ENCODE measurements at regions of chr18 and their contacts with region 1.

Region 1: GRCh38 chr18:35972197-35973052 is at the start of gene RMP24:
- DNase-seq: peak; percentile 85
- ATAC-seq: peak; percentile 94
- H3K4me3 Mint-ChIP-seq: peak within 1 kb of the TSS; percentile 98
- H3K27ac Mint-ChIP-seq: peak within 1 kb of the TSS; percentile 97
- H3K4me1 Mint-ChIP-seq: peaks cover 50% of the 10 kb centered on the region
- H3K27me3 Mint-ChIP-seq: no peaks in the 10 kb centered on the region
- CTCF ChIP-seq: no peak

Region 2: DNA sequence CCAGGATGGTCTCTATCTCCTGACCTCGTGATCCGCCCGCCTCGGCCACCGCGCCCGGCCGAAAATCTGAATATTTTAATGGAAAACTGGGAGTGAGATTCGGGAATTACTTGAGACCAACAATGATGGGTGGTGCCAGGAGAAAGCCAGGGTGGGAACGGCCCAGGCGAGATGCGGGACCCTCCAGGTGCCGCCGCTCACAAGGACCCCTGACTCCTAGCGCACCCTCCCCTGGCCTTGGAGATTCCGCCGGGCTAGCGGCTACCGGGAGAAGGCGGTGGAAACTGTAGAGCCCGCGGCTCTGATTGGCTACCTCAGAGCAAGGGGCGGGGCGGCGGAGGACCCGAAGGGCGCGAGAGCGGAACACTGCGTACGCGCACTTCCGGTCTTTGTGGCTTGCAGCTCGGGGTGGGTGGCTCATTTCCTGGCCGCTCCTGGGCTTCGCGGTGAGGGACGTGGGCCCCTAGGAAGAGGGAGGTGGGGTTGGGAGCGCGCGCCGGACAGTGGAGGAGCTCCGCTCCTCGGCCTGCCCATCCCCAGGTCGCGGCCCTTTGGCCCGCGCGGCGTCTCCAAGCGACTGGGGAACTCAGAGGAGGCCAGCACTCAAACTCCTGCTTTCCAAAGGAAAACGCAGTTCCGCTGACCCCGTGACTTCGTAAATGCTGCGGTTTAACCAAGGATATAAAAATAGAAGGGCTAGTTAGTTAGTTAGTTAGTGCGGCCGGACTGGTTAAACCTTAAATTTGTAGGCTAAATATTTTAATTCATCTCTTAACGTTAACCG is 731.6 kb before region 1 on chr18 and contains the start of gene ZNF397:
- CTCF ChIA-PET with region 1: no interaction called
- POLR2A ChIA-PET with region 1: no interaction called
- intact Hi-C with region 1: loop called (anchors 1 kb)
- DNase-seq: peak; percentile 93
- ATAC-seq: peak; percentile 97
- H3K4me3 Mint-ChIP-seq: peak within 1 kb of the TSS; percentile 97
- H3K27ac Mint-ChIP-seq: peak within 1 kb of the TSS; percentile 98
- H3K4me1 Mint-ChIP-seq: peaks cover 22% of the 10 kb centered on the region
- H3K27me3 Mint-ChIP-seq: no peaks in the 10 kb centered on the region
- CTCF ChIP-seq: no peak
- total RNA-seq, gene ZNF397: 35.2 and 48.7 TPM in 2 replicates

Region 3: GRCh38 chr18:35343936-35344735 is 628.3 kb before region 1 on chr18 and contains the start of gene ZNF24:
- CTCF ChIA-PET with region 1: no interaction called
- POLR2A ChIA-PET with region 1: interaction called, 16 read pairs
- intact Hi-C with region 1: loop called (anchors 1 kb)
- DNase-seq: peak; percentile 92
- ATAC-seq: peak; percentile 83
- H3K4me3 Mint-ChIP-seq: peak within 1 kb of the TSS; percentile 98
- H3K27ac Mint-ChIP-seq: peak within 1 kb of the TSS; percentile 96
- H3K4me1 Mint-ChIP-seq: peaks cover 59% of the 10 kb centered on the region
- H3K27me3 Mint-ChIP-seq: no peaks in the 10 kb centered on the region
- CTCF ChIP-seq: no peak
- total RNA-seq, gene ZNF24: 72.5 and 75.8 TPM in 2 replicates

Region 4: DNA sequence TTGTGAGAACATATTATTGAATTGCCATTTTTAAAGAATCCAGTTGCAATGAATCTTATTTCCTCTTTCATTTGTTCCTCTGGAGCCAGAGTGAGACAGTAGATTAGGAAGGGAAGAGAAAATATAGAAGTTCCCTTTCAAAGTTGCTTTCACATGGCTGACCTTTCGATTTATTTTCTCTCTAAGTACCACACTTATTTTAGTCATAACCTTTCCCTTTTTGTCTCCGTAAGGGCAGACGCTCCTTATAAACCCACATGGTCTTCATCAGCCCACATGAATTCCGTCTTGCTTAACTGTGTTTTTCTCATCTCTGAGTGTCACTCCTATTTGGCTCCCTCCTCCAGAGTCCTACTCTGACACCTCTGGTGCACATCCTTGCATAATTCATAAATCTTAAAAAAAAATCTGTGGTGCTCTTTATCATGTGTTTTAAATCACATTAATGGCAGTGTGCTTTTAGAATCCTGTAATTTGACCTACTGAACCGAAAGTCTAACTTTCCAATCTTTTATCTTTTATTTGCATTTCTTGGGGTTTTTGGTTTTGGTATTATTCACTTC is 556.8 kb before region 1 on chr18:
- CTCF ChIA-PET with region 1: no interaction called
- POLR2A ChIA-PET with region 1: interaction called, 11 read pairs
- intact Hi-C with region 1: loop called (anchors 5 kb)
- DNase-seq: no peak
- ATAC-seq: peak; percentile 31
- H3K4me3 Mint-ChIP-seq: peak overlapping the region; percentile 48
- H3K27ac Mint-ChIP-seq: peak overlapping the region; percentile 59
- H3K4me1 Mint-ChIP-seq: peaks cover 47% of the 10 kb centered on the region
- H3K27me3 Mint-ChIP-seq: no peaks in the 10 kb centered on the region
- CTCF ChIP-seq: no peak

Region 5: GRCh38 chr18:36067055-36067957 is 94.9 kb after region 1 on chr18 and contains the start of gene RPRD1A:
- CTCF ChIA-PET with region 1: no interaction called
- POLR2A ChIA-PET with region 1: interaction called, 13 read pairs
- intact Hi-C with region 1: loop called (anchors 1 kb)
- DNase-seq: peak; percentile 99
- ATAC-seq: peak; percentile 91
- H3K4me3 Mint-ChIP-seq: peak within 1 kb of the TSS; percentile 93
- H3K27ac Mint-ChIP-seq: peak within 1 kb of the TSS; percentile 88
- H3K4me1 Mint-ChIP-seq: peaks cover 44% of the 10 kb centered on the region
- H3K27me3 Mint-ChIP-seq: no peaks in the 10 kb centered on the region
- CTCF ChIP-seq: no peak
- total RNA-seq, gene RPRD1A: 40.7 and 47.6 TPM in 2 replicates

Region 6: GRCh38 chr18:36309436-36310391 is 337.3 kb after region 1 on chr18:
- CTCF ChIA-PET with region 1: no interaction called
- POLR2A ChIA-PET with region 1: no interaction called
- intact Hi-C with region 1: no loop called
- DNase-seq: no peak
- ATAC-seq: no peak
- H3K4me3 Mint-ChIP-seq: no peak overlapping the region
- H3K27ac Mint-ChIP-seq: no peak overlapping the region
- H3K4me1 Mint-ChIP-seq: no peaks in the 10 kb centered on the region
- H3K27me3 Mint-ChIP-seq: peaks cover 62% of the 10 kb centered on the region
- CTCF ChIP-seq: no peak

Measured in activated B cell treated with CpG ODN at 0.5 μM for 24 hours (primary cell).